ENCODE measurements at regions of chr2 and their contacts with region 1.

Region 1: GRCh38 chr2:88003074-88003755 is 13.1 kb downstream of the RNU2-63P start:
- DNase-seq: no peak
- ATAC-seq: no peak
- H3K4me3 ChIP-seq: no peak overlapping the region
- H3K4me3 Mint-ChIP-seq: no peak overlapping the region
- H3K27ac ChIP-seq: no peak overlapping the region
- H3K27ac Mint-ChIP-seq: no peak overlapping the region
- H3K4me1 ChIP-seq: no peaks in the 10 kb centered on the region
- H3K4me1 Mint-ChIP-seq: peaks cover 4% of the 10 kb centered on the region
- H3K27me3 ChIP-seq: no peaks in the 10 kb centered on the region
- H3K27me3 Mint-ChIP-seq: peaks cover 2% of the 10 kb centered on the region
- CTCF ChIP-seq: no peak

Region 2: DNA sequence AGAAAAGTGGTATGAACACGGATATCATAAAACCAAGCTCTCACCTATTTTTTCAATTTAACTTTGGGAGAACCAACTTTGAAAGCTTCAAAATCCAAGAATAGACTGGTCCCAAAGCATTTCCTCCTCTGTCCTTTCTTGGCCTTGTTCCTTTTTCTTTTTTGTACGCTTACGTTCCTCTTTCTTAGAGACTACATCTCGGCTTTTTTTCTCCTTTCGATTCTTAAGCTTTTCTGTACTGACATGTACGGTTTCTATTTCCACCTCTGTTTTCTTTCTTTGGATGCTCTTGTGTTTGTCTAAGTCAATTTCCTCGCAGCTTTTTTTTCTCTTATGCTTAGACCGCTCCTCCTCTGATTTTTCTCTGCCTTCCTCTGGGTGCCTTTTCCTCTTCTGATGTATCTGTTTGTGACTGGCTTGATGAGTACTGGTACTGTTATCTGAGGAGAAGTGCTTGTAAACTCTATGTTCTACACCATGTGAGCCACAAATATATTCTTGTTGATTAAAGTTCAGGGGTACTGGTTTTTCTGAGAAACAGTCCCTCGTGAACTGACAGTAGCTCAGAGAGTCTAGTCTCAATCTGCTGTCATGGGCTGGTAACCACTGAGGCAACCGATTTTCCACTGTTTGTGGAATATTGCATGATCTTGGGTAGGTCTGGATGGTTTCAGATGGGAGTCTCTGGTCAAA is 24.6 kb after region 1 on chr2:
- CTCF ChIA-PET with region 1: interaction called, 6 read pairs
- POLR2A ChIA-PET with region 1: no interaction called
- intact Hi-C with region 1: loop called in 1 of 2 experiments (anchors 1 kb)
- DNase-seq: no peak
- ATAC-seq: no peak
- H3K4me3 ChIP-seq: no peak overlapping the region
- H3K4me3 Mint-ChIP-seq: no peak overlapping the region
- H3K27ac ChIP-seq: no peak overlapping the region
- H3K27ac Mint-ChIP-seq: no peak overlapping the region
- H3K4me1 ChIP-seq: no peaks in the 10 kb centered on the region
- H3K4me1 Mint-ChIP-seq: peaks cover 7% of the 10 kb centered on the region
- H3K27me3 ChIP-seq: no peaks in the 10 kb centered on the region
- H3K27me3 Mint-ChIP-seq: no peaks in the 10 kb centered on the region
- CTCF ChIP-seq: no peak

Region 3: DNA sequence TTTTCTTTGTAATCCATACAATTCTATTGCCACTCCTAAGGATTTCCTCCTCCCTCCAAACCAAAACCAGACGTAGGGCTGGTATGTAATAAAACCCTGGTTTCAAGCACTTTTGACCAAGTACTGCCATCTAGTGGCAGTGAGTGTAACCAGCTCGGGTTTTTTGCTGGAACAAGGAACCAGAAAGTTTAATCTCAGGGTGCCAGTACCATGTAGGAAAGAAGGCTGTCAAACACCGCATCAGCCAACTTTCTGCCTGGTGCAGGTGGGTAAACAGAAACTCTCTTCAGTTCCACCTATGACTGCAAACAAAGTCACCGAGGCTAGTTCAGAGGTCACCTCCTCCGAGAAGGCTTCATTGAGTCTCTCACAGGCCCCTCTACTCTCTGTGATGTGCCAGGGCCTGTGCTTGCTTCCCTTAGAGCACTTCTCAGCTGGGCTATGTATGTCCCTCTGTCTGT is 156.8 kb after region 1 on chr2:
- CTCF ChIA-PET with region 1: interaction called, 3 read pairs
- POLR2A ChIA-PET with region 1: no interaction called
- intact Hi-C with region 1: loop called in 1 of 2 experiments (anchors 5 kb)
- DNase-seq: peak in 8 of 9 experiments; percentile 30 to 74 (median 49)
- ATAC-seq: peak; percentile 54
- H3K4me3 ChIP-seq: no peak overlapping the region
- H3K4me3 Mint-ChIP-seq: no peak overlapping the region
- H3K27ac ChIP-seq: no peak overlapping the region
- H3K27ac Mint-ChIP-seq: no peak overlapping the region
- H3K4me1 ChIP-seq: no peaks in the 10 kb centered on the region
- H3K4me1 Mint-ChIP-seq: no peaks in the 10 kb centered on the region
- H3K27me3 ChIP-seq: no peaks in the 10 kb centered on the region
- H3K27me3 Mint-ChIP-seq: peaks cover 2% of the 10 kb centered on the region
- CTCF ChIP-seq: peak; percentile 96

Region 4: GRCh38 chr2:88416016-88416680 is 412.9 kb after region 1 on chr2:
- CTCF ChIA-PET with region 1: no interaction called
- POLR2A ChIA-PET with region 1: no interaction called
- intact Hi-C with region 1: no loop called
- DNase-seq: no peak
- ATAC-seq: no peak
- H3K4me3 ChIP-seq: no peak overlapping the region
- H3K4me3 Mint-ChIP-seq: no peak overlapping the region
- H3K27ac ChIP-seq: no peak overlapping the region
- H3K27ac Mint-ChIP-seq: no peak overlapping the region
- H3K4me1 ChIP-seq: no peaks in the 10 kb centered on the region
- H3K4me1 Mint-ChIP-seq: no peaks in the 10 kb centered on the region
- H3K27me3 ChIP-seq: peaks cover 0 to 5% of the 10 kb centered on the region in 2 experiments
- H3K27me3 Mint-ChIP-seq: peaks cover 25% of the 10 kb centered on the region
- CTCF ChIP-seq: no peak